ENCODE measurements at regions of chr5 and their contacts with region 1.

Region 1: DNA sequence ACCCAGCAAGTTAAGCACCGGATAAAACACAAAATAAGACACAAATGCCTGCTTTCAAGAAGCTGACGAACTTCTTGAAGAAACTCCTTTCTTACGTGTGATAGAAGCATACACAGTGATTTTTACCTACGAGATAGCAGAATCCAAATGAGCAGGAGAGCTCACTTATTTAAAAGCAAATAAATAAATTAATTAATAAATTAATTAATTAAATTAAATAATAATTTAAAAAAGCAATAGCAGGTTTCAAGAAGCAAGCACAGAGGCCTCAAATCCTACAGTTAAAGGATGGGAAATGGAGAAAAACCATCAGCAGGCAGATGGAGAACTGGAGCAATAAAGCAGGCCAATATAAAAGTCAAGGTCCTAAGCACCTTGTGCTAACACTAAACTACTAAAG is 17.3 kb downstream of the LEAP2 start:
- DNase-seq: no peak
- ATAC-seq: no peak
- H3K4me3 ChIP-seq: no peak overlapping the region
- H3K27ac ChIP-seq: no peak overlapping the region
- H3K4me1 ChIP-seq: 0 out of 2 replicates have a peak, but pooled peaks cover 2% of the 10 kb centered on the region
- H3K27me3 ChIP-seq: no peaks in the 10 kb centered on the region
- CTCF ChIP-seq: no peak
- POLR2A ChIP-seq: no peak
- RAD21 ChIP-seq: no peak

Region 2: GRCh38 chr5:132055808-132056609 is 834.8 kb before region 1 on chr5:
- CTCF ChIA-PET with region 1: no interaction called
- POLR2A ChIA-PET with region 1: no interaction called
- dilution Hi-C with region 1: no loop called
- in situ Hi-C with region 1: no loop called
- intact Hi-C with region 1: no loop called
- DNase-seq: no peak
- ATAC-seq: no peak
- H3K4me3 ChIP-seq: no peak overlapping the region
- H3K27ac ChIP-seq: no peak overlapping the region
- H3K4me1 ChIP-seq: no peaks in the 10 kb centered on the region
- H3K27me3 ChIP-seq: peaks cover 39% of the 10 kb centered on the region
- CTCF ChIP-seq: no peak
- POLR2A ChIP-seq: no peak
- RAD21 ChIP-seq: no peak

Region 3: GRCh38 chr5:132927355-132928061 is 36.7 kb after region 1 on chr5:
- CTCF ChIA-PET with region 1: no interaction called
- POLR2A ChIA-PET with region 1: no interaction called
- dilution Hi-C with region 1: no loop called
- in situ Hi-C with region 1: no loop called
- intact Hi-C with region 1: loop called (anchors 5 kb)
- DNase-seq: no peak
- ATAC-seq: no peak
- H3K4me3 ChIP-seq: no peak overlapping the region
- H3K27ac ChIP-seq: no peak overlapping the region
- H3K4me1 ChIP-seq: no peaks in the 10 kb centered on the region
- H3K27me3 ChIP-seq: no peaks in the 10 kb centered on the region
- CTCF ChIP-seq: no peak
- POLR2A ChIP-seq: no peak
- RAD21 ChIP-seq: no peak